Activated T-helper 2 cell treated with anti-CD3 and anti-CD28 coated beads, Interferon-gamma antibody, Interleukin-2, Interleukin-4, amounts not matched to agents 10 μg/mL and 5 μg/mL and 100 μg/mL, durations not matched to agents 14 hours and 24 hours and 36 hours (primary cell): ENCODE measurements at regions of chr3 and their contacts with region 1.

Region 1: DNA sequence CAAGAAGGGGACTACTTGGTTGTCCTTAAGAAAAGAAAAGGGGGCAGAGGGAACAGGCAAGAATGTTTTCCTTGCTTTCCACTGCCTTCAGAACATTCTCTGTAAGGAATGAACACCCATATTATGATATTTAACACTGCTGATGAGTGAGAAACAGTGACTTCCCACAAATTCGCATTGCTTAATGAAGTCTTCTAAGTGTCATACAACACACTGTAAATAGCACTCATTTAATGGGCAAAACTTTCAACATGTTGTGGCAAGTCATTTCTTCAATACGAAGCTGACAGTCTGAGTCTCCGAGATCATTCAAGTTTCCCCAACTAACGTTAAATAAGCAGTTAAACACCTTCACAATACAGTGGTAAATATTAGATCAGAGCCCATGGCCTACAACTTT is 464.4 kb downstream of the SHQ1 start:
- DNase-seq: no peak
- H3K4me3 Mint-ChIP-seq: no peak overlapping the region
- H3K27ac Mint-ChIP-seq: peak overlapping the region; percentile 26
- H3K4me1 Mint-ChIP-seq: peaks cover 84% of the 10 kb centered on the region
- H3K27me3 Mint-ChIP-seq: no peaks in the 10 kb centered on the region

Region 2: DNA sequence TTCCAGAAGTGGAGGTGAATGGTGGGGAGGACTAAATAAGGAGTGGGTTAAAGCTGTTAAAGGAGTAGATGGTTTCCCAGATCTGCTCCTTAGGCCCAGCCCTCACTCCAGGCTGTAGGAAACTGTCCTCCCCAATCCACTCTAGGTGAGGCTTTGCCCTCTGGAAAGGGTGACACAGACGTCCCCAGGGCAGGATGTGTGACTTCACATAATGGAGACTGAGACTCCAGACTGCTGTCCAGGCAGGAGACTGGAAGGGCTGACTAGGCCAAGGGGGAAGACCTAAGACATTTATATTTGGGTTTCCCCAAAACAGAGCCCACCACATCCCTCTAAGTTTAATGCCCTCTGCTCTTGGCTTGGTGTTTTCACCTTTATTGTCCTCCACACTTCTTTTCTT is 24.1 kb before region 1 on chr3:
- intact Hi-C with region 1: no loop called
- DNase-seq: no peak
- H3K4me3 Mint-ChIP-seq: no peak overlapping the region
- H3K27ac Mint-ChIP-seq: no peak overlapping the region
- H3K4me1 Mint-ChIP-seq: peaks cover 23% of the 10 kb centered on the region
- H3K27me3 Mint-ChIP-seq: peaks cover 2% of the 10 kb centered on the region

Region 3: GRCh38 chr3:72395776-72396311 is 12.0 kb after region 1 on chr3:
- intact Hi-C with region 1: loop called (anchors 2 kb)
- DNase-seq: no peak
- H3K4me3 Mint-ChIP-seq: no peak overlapping the region
- H3K27ac Mint-ChIP-seq: no peak overlapping the region
- H3K4me1 Mint-ChIP-seq: peaks cover 37% of the 10 kb centered on the region
- H3K27me3 Mint-ChIP-seq: no peaks in the 10 kb centered on the region

Region 4: DNA sequence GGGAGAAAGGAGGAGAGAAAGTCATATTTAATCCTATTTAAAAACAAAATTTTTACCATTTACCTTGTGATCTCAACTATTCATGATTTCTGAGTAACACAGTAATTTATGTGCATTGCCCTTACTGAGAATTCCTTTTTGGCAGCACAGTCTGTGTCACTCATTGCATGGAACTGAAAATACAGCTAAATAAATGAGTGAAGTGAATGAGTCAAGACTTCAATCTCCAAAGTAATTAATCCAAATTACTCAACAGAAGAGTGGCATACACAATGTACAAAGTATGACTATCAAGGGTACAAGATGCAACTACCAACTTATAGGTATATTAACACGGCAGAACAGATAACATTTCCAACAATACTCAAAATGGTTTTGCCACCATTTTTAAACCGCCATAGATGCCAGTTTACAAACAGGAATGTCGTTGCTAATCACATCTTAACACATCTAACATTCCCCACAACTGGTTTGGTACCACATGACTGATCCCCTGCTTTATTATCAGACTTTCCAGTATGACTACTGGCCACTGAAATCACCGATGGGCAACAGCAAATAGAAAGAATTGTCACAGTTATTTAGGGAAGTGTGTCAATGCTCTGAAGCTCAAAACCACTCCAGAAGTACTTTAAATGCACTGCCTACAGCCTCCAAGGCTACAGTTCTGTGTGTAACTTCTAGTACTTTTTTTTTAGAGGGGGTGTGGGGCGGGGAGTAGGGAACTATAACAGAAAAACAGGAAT is 54.0 kb after region 1 on chr3:
- intact Hi-C with region 1: loop called (anchors 2 kb)
- DNase-seq: no peak
- H3K4me3 Mint-ChIP-seq: peak overlapping the region; percentile 60
- H3K27ac Mint-ChIP-seq: peak overlapping the region; percentile 86
- H3K4me1 Mint-ChIP-seq: peaks cover 76% of the 10 kb centered on the region
- H3K27me3 Mint-ChIP-seq: no peaks in the 10 kb centered on the region